ENCODE measurements at regions of chr1 and their contacts with region 1.

Region 1: DNA sequence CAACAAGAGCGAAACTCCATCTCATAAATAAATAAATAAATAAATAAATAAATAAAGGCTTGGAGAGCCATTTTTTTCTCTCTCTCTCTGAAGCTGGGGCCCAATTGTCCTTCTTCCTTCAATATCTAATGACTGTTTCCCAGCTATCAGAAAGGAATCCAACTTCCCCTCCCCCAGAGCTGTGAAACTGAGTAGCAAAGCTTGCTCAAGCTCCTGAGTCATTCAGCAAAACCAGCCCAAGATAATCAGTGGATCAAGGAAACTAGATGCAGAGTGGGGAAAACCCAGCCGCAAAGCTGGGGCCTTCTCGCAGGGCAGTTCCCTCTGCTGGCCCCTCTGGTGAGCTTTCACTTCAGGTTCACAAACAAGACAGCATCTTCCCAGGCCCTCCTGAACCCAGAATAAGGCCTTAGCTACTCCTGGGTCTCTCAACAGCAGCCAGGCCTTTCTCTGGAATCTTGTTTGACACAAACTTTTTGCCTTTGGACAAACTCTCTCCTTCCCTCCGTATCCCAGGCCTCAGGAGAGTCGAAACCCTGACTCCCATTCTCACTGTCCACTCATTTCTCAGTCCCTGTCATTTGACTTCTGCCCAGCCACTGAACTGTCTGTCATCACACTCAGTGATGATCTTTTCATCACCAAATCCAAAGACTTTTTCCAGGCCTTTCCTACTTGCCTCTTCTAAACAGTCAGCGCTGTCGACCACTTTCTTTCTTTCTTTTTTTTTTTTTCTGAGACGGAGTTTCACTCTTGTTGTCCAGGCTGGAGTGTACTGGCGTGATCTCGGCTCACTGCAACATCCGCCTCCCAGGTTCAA is 18.0 kb upstream of the PTP4A2 start:
- DNase-seq: no peak
- H3K4me3 ChIP-seq: no peak overlapping the region
- H3K27ac ChIP-seq: 0 out of 2 replicates have a peak overlapping the region, but pooled peaks have one; percentile 51
- H3K4me1 ChIP-seq: peaks cover 7 to 19% (median 12%) of the 10 kb centered on the region in 4 experiments; a peak in 6 of 7 replicates
- H3K27me3 ChIP-seq: no peaks in the 10 kb centered on the region
- CTCF ChIP-seq: peak; percentile 5 to 23 (median 13); a peak in 3 of 4 replicates
- EP300 ChIP-seq: no peak
- POLR2A ChIP-seq: no peak
- RAD21 ChIP-seq: peak; percentile 20 to 41; a peak in 3 of 4 replicates

Region 2: DNA sequence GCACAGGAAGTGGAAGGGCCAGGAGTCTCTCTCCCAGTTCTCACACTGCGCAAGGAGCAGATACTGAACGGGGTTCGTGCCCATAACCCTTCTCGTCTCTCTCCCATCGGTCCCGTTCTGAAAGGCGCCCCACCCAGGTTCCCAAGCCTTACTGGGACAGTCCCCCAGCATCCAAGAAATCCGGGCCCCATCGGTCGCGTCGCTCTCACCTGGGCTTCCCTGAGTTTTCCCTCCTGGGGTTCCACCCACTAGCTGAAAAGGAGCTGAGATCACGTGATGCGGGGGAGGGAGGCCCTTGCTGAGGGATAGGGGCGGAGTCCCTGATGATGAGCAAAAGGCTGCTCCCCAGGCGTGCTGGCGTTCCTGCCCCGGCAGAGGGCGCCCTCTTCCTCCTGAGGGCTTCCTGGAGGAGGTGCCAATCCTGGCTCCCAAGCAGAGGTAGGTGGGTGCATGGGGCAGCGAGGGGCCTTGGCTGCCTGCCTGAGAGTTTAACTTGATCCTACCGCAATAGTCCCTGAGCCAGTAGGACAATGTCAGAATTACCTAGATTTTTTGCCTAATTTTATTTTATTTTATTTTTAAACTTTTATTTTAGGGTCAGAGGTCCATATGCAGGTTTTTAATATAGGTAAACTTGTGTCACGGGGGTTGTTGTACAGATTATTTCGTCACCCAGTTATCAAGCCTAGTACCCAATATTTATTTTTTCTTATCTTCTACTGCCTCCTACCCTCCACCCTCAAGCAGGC is 140.2 kb before region 1 on chr1 and contains the start of gene SPOCD1:
- CTCF ChIA-PET with region 1: interaction called, 11 read pairs
- POLR2A ChIA-PET with region 1: interaction called, 3 read pairs
- DNase-seq: peak; percentile 92 to 100
- H3K4me3 ChIP-seq: peak within 1 kb of the TSS; percentile 31 to 60 (median 42); a peak in 7 of 8 replicates
- H3K27ac ChIP-seq: no peak within 1 kb of the TSS
- H3K4me1 ChIP-seq: peaks cover 0 to 2% (median 0%) of the 10 kb centered on the region in 4 experiments; a peak in 1 of 7 replicates
- H3K27me3 ChIP-seq: no peaks in the 10 kb centered on the region; a peak in 1 of 7 replicates
- CTCF ChIP-seq: peak; percentile 90 to 99 (median 99)
- EP300 ChIP-seq: no peak
- POLR2A ChIP-seq: peak in 1 of 2 experiments; percentile 60; a peak in 2 of 3 replicates
- RAD21 ChIP-seq: peak; percentile 87 to 93
- total RNA-seq, gene SPOCD1: 1.8 and 2.0 TPM in 2 replicates

Region 3: GRCh38 chr1:31938174-31938950 is 17.8 kb before region 1 on chr1 and contains the start of gene PTP4A2:
- CTCF ChIA-PET with region 1: interaction called, 27 read pairs
- POLR2A ChIA-PET with region 1: interaction called, 61 read pairs
- DNase-seq: peak; percentile 94
- H3K4me3 ChIP-seq: peak within 1 kb of the TSS; percentile 92 to 99 (median 95)
- H3K27ac ChIP-seq: peak within 1 kb of the TSS; percentile 54
- H3K4me1 ChIP-seq: peaks cover 3 to 10% (median 8%) of the 10 kb centered on the region in 4 experiments; a peak in 6 of 7 replicates
- H3K27me3 ChIP-seq: peaks cover 0 to 6% (median 0%) of the 10 kb centered on the region in 4 experiments; a peak in 2 of 7 replicates
- CTCF ChIP-seq: peak; percentile 41 to 65 (median 60)
- EP300 ChIP-seq: peak in 1 of 2 experiments; percentile 100; a peak in 2 of 3 replicates
- POLR2A ChIP-seq: peak in 1 of 2 experiments; percentile 62; a peak in 2 of 3 replicates
- RAD21 ChIP-seq: peak in 1 of 2 experiments; percentile 26; a peak in 1 of 4 replicates
- total RNA-seq, gene PTP4A2: 167 and 214 TPM in 2 replicates

Region 4: GRCh38 chr1:31944205-31945089 is 11.7 kb before region 1 on chr1:
- CTCF ChIA-PET with region 1: interaction called, 27 read pairs
- POLR2A ChIA-PET with region 1: interaction called, 61 read pairs
- DNase-seq: peak; percentile 82 to 93
- H3K4me3 ChIP-seq: peak overlapping the region; percentile 58 to 69 (median 66)
- H3K27ac ChIP-seq: peak overlapping the region; percentile 89
- H3K4me1 ChIP-seq: peaks cover 3 to 16% (median 5%) of the 10 kb centered on the region in 4 experiments
- H3K27me3 ChIP-seq: peaks cover 0 to 3% (median 0%) of the 10 kb centered on the region in 4 experiments; a peak in 2 of 7 replicates
- CTCF ChIP-seq: peak in 1 of 3 experiments; percentile 0; a peak in 1 of 4 replicates
- EP300 ChIP-seq: peak in 1 of 2 experiments; percentile 72; a peak in 1 of 3 replicates
- POLR2A ChIP-seq: peak; percentile 94 to 98
- RAD21 ChIP-seq: no peak; a peak in 1 of 4 replicates